ENCODE measurements at regions of chr12 and their contacts with region 1.

Region 1: GRCh38 chr12:100404769-100405407 is 48.0 kb downstream of the SLC17A8 start:
- DNase-seq: peak; percentile 48
- H3K4me3 ChIP-seq: no peak overlapping the region
- H3K27ac ChIP-seq: no peak overlapping the region
- H3K4me1 ChIP-seq: no peaks in the 10 kb centered on the region
- H3K27me3 ChIP-seq: no peaks in the 10 kb centered on the region
- CTCF ChIP-seq: peak; percentile 67 to 73
- POLR2A ChIP-seq: no peak

Region 2: GRCh38 chr12:99810718-99811593 is 593.9 kb before region 1 on chr12:
- CTCF ChIA-PET with region 1: interaction called, 5 read pairs
- POLR2A ChIA-PET with region 1: no interaction called
- dilution Hi-C with region 1: no loop called
- intact Hi-C with region 1: loop called (anchors 2 kb)
- DNase-seq: peak; percentile 57
- H3K4me3 ChIP-seq: no peak overlapping the region
- H3K27ac ChIP-seq: no peak overlapping the region
- H3K4me1 ChIP-seq: no peaks in the 10 kb centered on the region
- H3K27me3 ChIP-seq: peaks cover 0 to 2% of the 10 kb centered on the region in 2 experiments
- CTCF ChIP-seq: no peak
- POLR2A ChIP-seq: no peak

Region 3: DNA sequence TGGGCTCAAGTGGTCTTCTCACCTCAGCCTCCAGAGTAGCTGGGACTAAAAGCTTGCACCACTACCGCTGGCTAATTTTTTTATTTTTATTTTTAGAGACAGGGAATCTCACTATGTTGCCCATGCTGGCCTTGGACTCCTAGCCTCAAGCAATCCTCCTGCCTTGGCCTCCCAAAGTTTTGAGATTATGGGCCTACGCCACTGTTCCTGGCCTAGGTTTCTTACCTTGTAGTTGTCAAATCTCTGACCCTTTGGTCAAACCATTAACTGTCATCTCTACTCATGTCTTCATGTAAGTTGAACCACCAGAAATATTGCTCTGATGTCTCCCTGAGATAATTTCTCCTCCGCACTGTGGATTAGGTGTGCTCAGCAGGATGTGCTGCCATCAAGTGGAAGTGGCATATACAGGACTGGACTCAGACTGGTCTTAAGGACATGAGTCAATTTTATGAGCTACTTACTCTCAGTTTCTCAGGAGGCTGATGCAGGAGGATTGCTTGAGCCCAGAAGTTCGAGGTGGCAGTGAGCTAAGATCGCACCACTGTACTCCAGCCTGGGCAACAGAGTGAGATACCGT is 175.7 kb before region 1 on chr12:
- CTCF ChIA-PET with region 1: interaction called, 172 read pairs
- POLR2A ChIA-PET with region 1: no interaction called
- dilution Hi-C with region 1: no loop called
- intact Hi-C with region 1: loop called (anchors 1 kb)
- DNase-seq: no peak
- H3K4me3 ChIP-seq: no peak overlapping the region
- H3K27ac ChIP-seq: no peak overlapping the region
- H3K4me1 ChIP-seq: no peaks in the 10 kb centered on the region
- H3K27me3 ChIP-seq: no peaks in the 10 kb centered on the region
- CTCF ChIP-seq: no peak
- POLR2A ChIP-seq: no peak

Region 4: DNA sequence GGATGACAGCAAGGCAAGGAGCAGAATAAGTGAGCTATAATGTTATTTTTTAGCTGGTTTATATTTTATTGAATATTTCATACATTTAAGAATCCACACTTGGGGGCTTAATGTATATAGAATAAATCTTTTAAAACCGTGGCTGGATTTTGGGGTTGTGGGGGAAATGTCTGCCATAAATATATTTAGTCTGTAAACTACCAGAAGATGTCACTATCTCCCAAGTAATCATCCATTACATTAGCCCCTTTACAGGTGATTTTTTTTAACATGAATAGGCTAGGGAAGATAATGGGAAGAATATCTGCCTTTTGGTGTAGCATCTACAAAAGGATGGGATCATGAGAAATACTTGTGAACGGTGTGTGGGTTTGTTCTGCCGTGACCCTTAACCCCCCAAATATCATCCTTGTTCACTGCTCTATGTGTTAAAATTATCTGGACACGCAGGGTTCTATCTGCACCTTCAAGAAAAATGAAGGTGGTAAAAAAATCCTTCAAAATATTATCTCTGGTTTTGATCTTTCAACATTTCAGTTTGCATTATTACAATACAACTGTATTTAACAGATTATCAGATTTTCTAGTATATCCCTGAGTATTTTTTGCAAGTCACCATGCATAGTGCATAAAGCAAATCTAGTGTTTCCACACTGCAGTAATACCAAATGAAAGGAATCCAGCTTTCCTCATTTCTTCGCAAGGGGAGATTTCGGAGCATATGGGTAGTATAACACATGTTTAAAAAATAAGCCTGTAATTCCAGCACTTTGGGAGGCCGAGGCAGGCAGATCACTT is 56.0 kb before region 1 on chr12:
- CTCF ChIA-PET with region 1: interaction called, 23 read pairs
- POLR2A ChIA-PET with region 1: no interaction called
- dilution Hi-C with region 1: no loop called
- intact Hi-C with region 1: no loop called
- DNase-seq: peak; percentile 37
- H3K4me3 ChIP-seq: no peak overlapping the region
- H3K27ac ChIP-seq: no peak overlapping the region
- H3K4me1 ChIP-seq: no peaks in the 10 kb centered on the region
- H3K27me3 ChIP-seq: peaks cover 0 to 2% of the 10 kb centered on the region in 2 experiments
- CTCF ChIP-seq: no peak
- POLR2A ChIP-seq: no peak

Region 5: DNA sequence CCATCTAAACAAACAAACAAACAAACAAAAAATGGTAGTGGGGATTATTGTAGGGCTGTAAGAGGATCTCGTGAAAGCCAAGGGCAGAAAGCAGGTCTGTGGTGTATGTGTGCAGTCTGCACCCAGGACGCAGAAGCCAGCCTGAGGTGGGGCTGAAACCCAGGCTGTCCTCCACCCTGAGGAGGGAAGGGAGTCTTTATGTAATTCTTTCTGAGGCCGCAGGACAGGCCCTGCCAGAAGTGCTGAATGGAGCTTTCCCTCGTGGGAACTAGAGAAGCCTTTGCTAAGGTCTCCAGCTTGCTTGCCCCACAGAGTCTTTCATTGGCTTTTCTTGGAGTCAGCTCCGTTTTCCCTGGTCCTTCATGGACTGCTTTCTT is 20.3 kb before region 1 on chr12:
- CTCF ChIA-PET with region 1: interaction called, 21 read pairs
- POLR2A ChIA-PET with region 1: no interaction called
- dilution Hi-C with region 1: no loop called
- intact Hi-C with region 1: no loop called
- DNase-seq: no peak
- H3K4me3 ChIP-seq: no peak overlapping the region
- H3K27ac ChIP-seq: no peak overlapping the region
- H3K4me1 ChIP-seq: no peaks in the 10 kb centered on the region
- H3K27me3 ChIP-seq: peaks cover 0 to 2% of the 10 kb centered on the region in 2 experiments
- CTCF ChIP-seq: no peak
- POLR2A ChIP-seq: no peak